Heart right ventricle (tissue), 16 donors: ENCODE measurements at regions of chrX and their contacts with region 1.

Region 1: DNA sequence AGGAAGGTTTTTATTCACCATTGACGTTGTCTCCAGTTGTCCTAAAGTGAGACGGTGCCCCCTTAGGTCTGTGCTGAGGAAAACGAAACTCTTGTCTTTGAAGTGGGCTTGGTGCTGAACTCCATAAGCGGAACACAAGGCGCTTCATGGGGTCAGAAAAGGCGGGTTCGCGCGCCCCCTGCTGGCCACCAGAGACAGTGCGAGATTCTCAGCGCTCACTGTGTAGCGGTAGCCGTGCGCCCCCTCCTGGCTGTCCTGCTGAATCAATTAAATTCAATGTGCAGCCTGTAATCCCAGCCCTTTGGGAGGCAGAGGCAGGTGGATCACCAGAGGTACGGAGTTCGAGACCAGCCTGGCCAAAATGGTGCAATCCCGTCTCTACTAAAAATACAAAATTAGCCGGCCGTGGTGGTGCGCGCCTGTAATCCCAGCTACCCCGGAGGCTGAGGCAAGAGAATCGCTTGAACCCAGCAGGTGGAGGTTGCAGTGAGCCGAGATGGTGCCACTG is 64.1 kb downstream of the RLIM start:
- DNase-seq: peak; percentile 77 to 84
- ATAC-seq: peak; percentile 85 to 97 (median 95)
- H3K4me3 ChIP-seq: peak overlapping the region in 2 of 10 donors; percentile 8 to 24
- H3K27ac ChIP-seq: peak overlapping the region in 3 of 10 donors; percentile 15 to 35 (median 22)
- H3K4me1 ChIP-seq: peaks cover 0 to 4% (median 0%) of the 10 kb centered on the region in 9 donors
- H3K27me3 ChIP-seq: peaks cover 0 to 15% (median 0%) of the 10 kb centered on the region in 7 donors
- CTCF ChIP-seq: peak; percentile 89 to 98 (median 95)

Region 2: GRCh38 chrX:74382613-74383012 is 167.7 kb before region 1 on chrX:
- intact Hi-C with region 1: loop called in 9 of 10 experiments (anchors 1 to 5 kb)
- DNase-seq: peak; percentile 13 to 32
- ATAC-seq: peak; percentile 65 to 94 (median 86)
- H3K4me3 ChIP-seq: no peak overlapping the region
- H3K27ac ChIP-seq: no peak overlapping the region
- H3K4me1 ChIP-seq: no peaks in the 10 kb centered on the region
- H3K27me3 ChIP-seq: peaks cover 0 to 40% (median 0%) of the 10 kb centered on the region in 7 donors
- CTCF ChIP-seq: peak; percentile 49 to 80 (median 68)